Activated CD4-positive, alpha-beta memory T cell treated with anti-CD3 and anti-CD28 coated beads, Interleukin-2, amount 10 ng/mL, durations not matched to agents 7 days and 5 days (primary cell): ENCODE measurements at regions of chr9 and their contacts with region 1.

Region 1: GRCh38 chr9:84718476-84718875 is 48.9 kb downstream of the NTRK2 start:
- DNase-seq: no peak
- H3K4me3 Mint-ChIP-seq: no peak overlapping the region
- H3K27ac Mint-ChIP-seq: no peak overlapping the region
- H3K4me1 Mint-ChIP-seq: peaks cover 17% of the 10 kb centered on the region
- H3K27me3 Mint-ChIP-seq: peaks cover 18% of the 10 kb centered on the region

Region 2: GRCh38 chr9:84697509-84698114 is 20.9 kb before region 1 on chr9:
- CTCF ChIA-PET with region 1: interaction called, 13 read pairs
- POLR2A ChIA-PET with region 1: no interaction called
- DNase-seq: peak; percentile 69
- H3K4me3 Mint-ChIP-seq: no peak overlapping the region
- H3K27ac Mint-ChIP-seq: no peak overlapping the region
- H3K4me1 Mint-ChIP-seq: peaks cover 29% of the 10 kb centered on the region
- H3K27me3 Mint-ChIP-seq: peaks cover 3% of the 10 kb centered on the region